Mammary epithelial cell (primary cell): ENCODE measurements at regions of chr5 and their contacts with region 1.

Region 1: GRCh38 chr5:23820765-23821471 is 313.5 kb downstream of the PRDM9 start:
- DNase-seq: peak; percentile 53
- H3K4me3 ChIP-seq: no peak overlapping the region
- H3K27ac ChIP-seq: no peak overlapping the region
- H3K4me1 ChIP-seq: no peaks in the 10 kb centered on the region
- H3K27me3 ChIP-seq: no peaks in the 10 kb centered on the region
- CTCF ChIP-seq: peak; percentile 64 to 69

Region 2: DNA sequence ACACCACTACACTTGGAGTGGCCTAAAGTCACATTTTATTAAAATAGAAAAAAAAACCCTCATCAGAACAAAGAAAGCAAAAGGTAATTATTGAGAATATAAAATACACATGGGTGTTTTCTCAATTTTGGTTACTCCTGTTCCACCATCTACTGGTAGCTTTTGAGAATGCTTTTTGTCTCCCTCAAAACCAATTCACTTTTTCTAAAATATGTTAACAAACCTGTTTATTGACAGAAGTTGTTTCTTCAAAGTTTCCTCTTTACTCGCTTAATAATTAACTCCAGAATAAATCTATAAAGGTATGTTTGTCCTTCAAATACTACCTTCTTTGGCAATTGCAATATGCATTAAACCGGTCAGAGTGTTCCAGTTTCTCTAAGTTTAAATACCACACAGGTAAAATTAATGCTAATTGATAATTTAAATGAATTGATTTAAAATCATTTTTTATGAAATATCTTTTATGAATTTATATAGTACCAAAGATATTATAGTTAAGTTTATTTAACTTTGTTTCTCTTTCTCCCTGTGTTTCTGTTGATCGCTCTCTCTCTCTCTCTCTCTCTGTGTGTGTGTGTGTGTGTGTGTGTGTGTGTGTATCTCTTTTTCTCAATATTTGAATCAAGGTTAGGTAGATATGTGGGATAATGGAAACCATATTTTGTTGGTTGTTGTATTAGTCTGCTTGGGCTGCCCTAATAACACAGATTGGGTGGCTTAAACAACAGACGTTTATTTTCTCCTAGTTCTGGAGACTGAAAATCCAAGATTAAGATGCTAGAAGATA is 173.9 kb after region 1 on chr5:
- CTCF ChIA-PET with region 1: no interaction called
- dilution Hi-C with region 1: no loop called
- in situ Hi-C with region 1: no loop called
- intact Hi-C with region 1: loop called (anchors 1 kb)
- DNase-seq: no peak
- H3K4me3 ChIP-seq: no peak overlapping the region
- H3K27ac ChIP-seq: no peak overlapping the region
- H3K4me1 ChIP-seq: no peaks in the 10 kb centered on the region
- H3K27me3 ChIP-seq: no peaks in the 10 kb centered on the region
- CTCF ChIP-seq: peak; percentile 20 to 45

Region 3: GRCh38 chr5:24633712-24634325 is 812.9 kb after region 1 on chr5:
- CTCF ChIA-PET with region 1: no interaction called
- dilution Hi-C with region 1: no loop called
- in situ Hi-C with region 1: no loop called
- intact Hi-C with region 1: loop called (anchors 10 kb)
- DNase-seq: peak; percentile 8
- H3K4me3 ChIP-seq: no peak overlapping the region
- H3K27ac ChIP-seq: no peak overlapping the region
- H3K4me1 ChIP-seq: no peaks in the 10 kb centered on the region
- H3K27me3 ChIP-seq: no peaks in the 10 kb centered on the region
- CTCF ChIP-seq: peak; percentile 57 to 58